H1 (cell line): ENCODE measurements at regions of chr11 and their contacts with region 1.

Region 1: DNA sequence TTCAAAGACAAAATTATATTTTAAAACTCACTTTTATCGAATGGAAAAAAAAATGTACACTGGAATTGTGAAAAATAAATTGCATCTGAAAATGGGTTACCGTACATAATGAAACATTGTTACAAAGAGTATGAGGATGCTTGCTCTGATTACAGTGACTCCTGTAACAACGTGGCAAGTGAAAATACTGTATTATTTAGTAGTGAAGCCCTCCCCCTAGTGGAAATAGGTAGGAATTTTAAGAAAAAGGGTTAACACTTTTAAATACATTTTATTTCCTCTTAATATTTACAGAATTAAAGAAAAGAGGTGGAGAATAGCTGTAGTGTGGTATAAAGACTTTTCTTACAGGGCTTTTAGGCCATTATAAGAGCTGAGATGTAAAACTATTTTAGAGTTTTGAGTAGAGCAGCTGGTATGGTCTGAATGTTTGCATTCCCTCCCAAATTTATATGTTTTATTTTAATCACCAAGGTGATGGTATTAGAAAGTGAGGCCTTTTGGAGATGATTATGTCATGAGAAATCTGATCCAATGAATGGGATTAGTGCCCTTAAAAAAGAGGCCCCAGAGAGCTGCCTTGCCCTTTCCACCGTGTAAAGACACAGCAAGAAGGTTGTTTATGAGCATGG is 25.2 kb downstream of the FAM76B start:
- DNase-seq: no peak
- H3K4me3 ChIP-seq: no peak overlapping the region
- H3K27ac ChIP-seq: no peak overlapping the region
- H3K4me1 ChIP-seq: no peaks in the 10 kb centered on the region
- H3K27me3 ChIP-seq: no peaks in the 10 kb centered on the region
- CTCF ChIP-seq: peak in 2 of 3 experiments; percentile 38 to 52; a peak in 2 of 4 replicates
- EP300 ChIP-seq: no peak
- POLR2A ChIP-seq: no peak
- RAD21 ChIP-seq: peak; percentile 77 to 80

Region 2: DNA sequence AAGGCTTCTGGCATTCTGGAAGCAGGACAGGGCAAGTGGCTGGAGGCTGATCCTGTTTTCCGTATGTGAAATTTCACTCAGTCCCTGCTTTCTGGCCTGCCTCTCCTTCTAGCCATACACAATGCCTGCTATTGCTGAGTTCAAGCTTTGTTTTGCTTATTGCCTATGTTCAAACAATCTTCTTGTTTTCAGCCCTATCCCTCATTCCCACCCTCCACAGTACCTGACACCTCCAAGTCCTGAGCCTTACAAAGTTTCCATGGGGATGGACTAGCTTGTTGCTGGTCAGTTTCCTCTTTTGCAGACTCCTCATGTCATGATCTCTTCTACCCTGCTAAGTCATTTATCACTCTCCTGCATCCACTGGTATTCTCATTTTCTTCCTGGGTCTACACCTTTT is 12.9 kb before region 1 on chr11:
- CTCF ChIA-PET with region 1: interaction called, 34 read pairs
- POLR2A ChIA-PET with region 1: no interaction called
- DNase-seq: no peak
- H3K4me3 ChIP-seq: no peak overlapping the region
- H3K27ac ChIP-seq: no peak overlapping the region
- H3K4me1 ChIP-seq: no peaks in the 10 kb centered on the region
- H3K27me3 ChIP-seq: no peaks in the 10 kb centered on the region
- CTCF ChIP-seq: no peak
- EP300 ChIP-seq: no peak
- POLR2A ChIP-seq: no peak
- RAD21 ChIP-seq: no peak

Region 3: GRCh38 chr11:95780544-95780943 is 16.2 kb after region 1 on chr11:
- CTCF ChIA-PET with region 1: no interaction called
- POLR2A ChIA-PET with region 1: no interaction called
- DNase-seq: no peak
- H3K4me3 ChIP-seq: no peak overlapping the region
- H3K27ac ChIP-seq: no peak overlapping the region
- H3K4me1 ChIP-seq: no peaks in the 10 kb centered on the region
- H3K27me3 ChIP-seq: no peaks in the 10 kb centered on the region
- CTCF ChIP-seq: no peak
- EP300 ChIP-seq: no peak
- POLR2A ChIP-seq: no peak
- RAD21 ChIP-seq: no peak

Region 4: GRCh38 chr11:95863486-95864140 is 99.2 kb after region 1 on chr11:
- CTCF ChIA-PET with region 1: no interaction called
- POLR2A ChIA-PET with region 1: no interaction called
- DNase-seq: no peak
- H3K4me3 ChIP-seq: no peak overlapping the region
- H3K27ac ChIP-seq: no peak overlapping the region
- H3K4me1 ChIP-seq: no peaks in the 10 kb centered on the region
- H3K27me3 ChIP-seq: no peaks in the 10 kb centered on the region
- CTCF ChIP-seq: no peak
- EP300 ChIP-seq: no peak
- POLR2A ChIP-seq: no peak
- RAD21 ChIP-seq: no peak